ENCODE measurements at regions of chr5 and their contacts with region 1.

Region 1: GRCh38 chr5:78886341-78887230 is 98.5 kb downstream of the ARSB start:
- DNase-seq: no peak
- ATAC-seq: no peak
- H3K4me3 Mint-ChIP-seq: no peak overlapping the region
- H3K27ac Mint-ChIP-seq: no peak overlapping the region
- H3K4me1 Mint-ChIP-seq: peaks cover 20% of the 10 kb centered on the region
- H3K27me3 Mint-ChIP-seq: no peaks in the 10 kb centered on the region
- CTCF ChIP-seq: peak; percentile 78

Region 2: GRCh38 chr5:78899922-78900362 is 13.4 kb after region 1 on chr5:
- CTCF ChIA-PET with region 1: interaction called, 12 read pairs
- POLR2A ChIA-PET with region 1: no interaction called
- intact Hi-C with region 1: no loop called
- DNase-seq: peak; percentile 43
- ATAC-seq: no peak
- H3K4me3 Mint-ChIP-seq: no peak overlapping the region
- H3K27ac Mint-ChIP-seq: no peak overlapping the region
- H3K4me1 Mint-ChIP-seq: no peaks in the 10 kb centered on the region
- H3K27me3 Mint-ChIP-seq: no peaks in the 10 kb centered on the region
- CTCF ChIP-seq: peak; percentile 33

Region 3: GRCh38 chr5:78972654-78973428 is 86.3 kb after region 1 on chr5:
- CTCF ChIA-PET with region 1: no interaction called
- POLR2A ChIA-PET with region 1: no interaction called
- intact Hi-C with region 1: loop called (anchors 10 kb)
- DNase-seq: no peak
- ATAC-seq: no peak
- H3K4me3 Mint-ChIP-seq: no peak overlapping the region
- H3K27ac Mint-ChIP-seq: no peak overlapping the region
- H3K4me1 Mint-ChIP-seq: peaks cover 4% of the 10 kb centered on the region
- H3K27me3 Mint-ChIP-seq: no peaks in the 10 kb centered on the region
- CTCF ChIP-seq: no peak